Activated CD8-positive, alpha-beta T cell treated with anti-CD3 and anti-CD28 coated beads for 36 hours (primary cell): ENCODE measurements at regions of chr4 and their contacts with region 1.

Region 1: DNA sequence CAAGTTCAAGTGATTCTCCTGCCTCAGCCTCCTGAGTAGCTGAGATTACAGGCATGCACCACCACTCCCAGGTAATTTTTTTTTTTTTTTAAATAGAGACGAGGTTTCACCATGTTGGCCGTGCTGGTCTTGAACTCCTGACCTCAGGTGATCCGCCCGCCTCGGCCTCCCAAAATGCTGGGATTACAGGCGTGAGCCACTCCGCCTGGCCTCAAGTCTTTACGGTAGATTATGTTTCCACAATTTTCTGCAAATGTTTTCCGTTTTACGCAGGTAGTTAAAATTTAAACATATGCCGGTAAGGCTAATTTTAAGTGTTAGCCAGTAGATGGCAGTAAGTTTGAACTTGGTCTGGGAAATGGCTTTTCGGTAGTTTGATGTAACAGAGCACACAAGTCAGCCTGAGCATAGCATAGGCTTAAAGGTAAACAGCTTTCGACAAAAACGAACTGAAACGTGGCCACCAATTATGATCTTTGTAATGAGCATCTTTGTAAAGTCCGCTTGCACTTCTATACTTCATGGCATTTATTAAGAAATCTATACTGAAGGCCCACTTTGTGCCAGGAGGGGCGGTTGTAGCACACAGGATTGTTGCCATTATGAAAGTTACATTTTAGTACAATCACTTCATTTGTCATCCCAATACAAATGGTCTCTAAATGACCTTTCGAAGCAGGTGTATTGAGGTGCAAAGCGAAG is 31.1 kb downstream of the CCKAR start:
- DNase-seq: no peak
- ATAC-seq: peak; percentile 67
- H3K4me3 Mint-ChIP-seq: peak overlapping the region; percentile 20
- H3K27ac Mint-ChIP-seq: no peak overlapping the region
- H3K4me1 Mint-ChIP-seq: peaks cover 16% of the 10 kb centered on the region
- H3K27me3 Mint-ChIP-seq: no peaks in the 10 kb centered on the region
- CTCF ChIP-seq: peak; percentile 33

Region 2: DNA sequence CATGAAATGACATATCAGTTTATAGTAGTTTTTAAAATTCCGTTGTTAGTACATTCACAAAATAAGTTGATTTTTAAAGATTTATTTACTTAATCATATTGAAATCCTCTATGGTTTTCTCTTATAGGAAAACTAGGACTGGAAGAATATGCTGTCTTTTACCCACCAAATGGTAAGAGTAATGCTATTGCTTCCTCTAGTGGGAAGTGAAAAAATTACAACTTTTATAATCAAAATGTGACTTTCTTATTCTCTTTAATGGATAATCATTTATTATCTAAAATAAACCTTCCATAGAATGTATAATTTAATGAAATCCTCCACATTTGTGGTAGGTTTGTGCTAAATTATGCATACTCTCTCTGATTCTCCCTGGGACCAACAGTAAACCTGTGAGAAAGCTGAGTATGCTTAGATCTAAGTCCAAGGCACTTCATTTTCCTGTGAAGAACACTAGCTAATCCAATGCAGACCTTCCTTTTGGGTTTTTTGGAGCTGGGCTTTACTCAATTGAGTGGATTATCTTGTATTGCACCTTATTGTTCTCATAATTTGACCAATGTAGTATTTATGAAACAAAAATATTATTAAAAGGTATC is 260.8 kb after region 1 on chr4:
- CTCF ChIA-PET with region 1: interaction called, 3 read pairs
- POLR2A ChIA-PET with region 1: no interaction called
- intact Hi-C with region 1: loop called (anchors 10 kb)
- DNase-seq: no peak
- ATAC-seq: no peak
- H3K4me3 Mint-ChIP-seq: no peak overlapping the region
- H3K27ac Mint-ChIP-seq: no peak overlapping the region
- H3K4me1 Mint-ChIP-seq: peaks cover 18% of the 10 kb centered on the region
- H3K27me3 Mint-ChIP-seq: no peaks in the 10 kb centered on the region
- CTCF ChIP-seq: peak; percentile 58